MCF 10A (cell line): ENCODE measurements at regions of chr16 and their contacts with region 1.

Region 1: GRCh38 chr16:21158208-21159110 is at the start of gene LDAF1:
- DNase-seq: peak; percentile 82
- H3K4me3 Mint-ChIP-seq: peak within 1 kb of the TSS; percentile 97
- H3K27ac Mint-ChIP-seq: peak within 1 kb of the TSS; percentile 95
- H3K4me1 Mint-ChIP-seq: peaks cover 15% of the 10 kb centered on the region
- H3K27me3 Mint-ChIP-seq: no peaks in the 10 kb centered on the region
- CTCF ChIP-seq: no peak
- total RNA-seq, gene LDAF1: 30.1 and 37.8 TPM in 2 replicates

Region 2: DNA sequence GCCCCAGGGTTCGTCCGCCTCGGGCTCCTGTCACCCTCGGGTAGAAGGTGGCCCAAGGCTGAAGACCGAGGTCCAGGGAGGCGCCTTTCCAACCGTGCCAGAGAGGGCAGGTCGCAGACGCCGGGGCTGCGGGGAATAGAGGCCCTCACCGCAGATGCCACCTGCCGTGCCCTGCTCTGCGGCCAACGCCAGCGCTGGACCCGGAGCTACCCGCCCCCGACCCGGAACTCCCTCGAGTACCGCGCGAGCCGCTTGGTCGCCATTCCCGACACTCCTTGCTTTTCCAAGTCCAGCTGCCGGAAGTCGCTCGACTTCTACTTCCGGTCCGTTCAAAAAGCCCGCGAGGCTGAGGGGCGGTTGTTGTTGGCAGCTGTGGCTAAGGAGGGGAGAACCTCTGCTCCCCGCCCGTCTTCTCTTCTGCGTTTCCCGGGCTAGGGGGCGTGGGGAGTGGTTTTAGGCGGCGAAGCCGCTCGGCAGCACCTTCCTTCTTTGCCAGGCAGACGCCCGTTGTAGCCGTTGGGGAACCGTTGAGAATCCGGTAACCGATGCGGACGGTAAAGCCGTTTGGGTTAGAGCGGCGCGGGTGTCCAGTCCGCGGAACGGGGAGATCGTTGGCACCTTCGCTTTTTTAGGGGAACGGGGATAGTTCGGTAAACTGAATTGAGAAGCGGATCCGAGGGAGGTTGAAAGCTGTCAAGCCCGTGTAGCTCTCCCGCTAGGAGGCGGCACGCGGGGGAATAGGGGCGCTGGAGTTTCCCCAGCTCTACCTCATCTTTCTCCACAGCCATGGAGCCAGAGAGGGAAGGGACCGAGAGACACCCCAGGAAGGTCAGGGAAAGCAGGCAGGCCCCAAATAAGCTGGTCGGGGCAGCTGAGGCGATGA is 352.1 kb before region 1 on chr16 and contains the starts of genes ERI2 and REXO5:
- CTCF ChIA-PET with region 1: interaction called, 4 read pairs
- POLR2A ChIA-PET with region 1: interaction called, 4 read pairs
- intact Hi-C with region 1: loop called (anchors 5 kb)
- DNase-seq: peak; percentile 95
- H3K4me3 Mint-ChIP-seq: peak within 1 kb of the TSS; percentile 97
- H3K27ac Mint-ChIP-seq: peak within 1 kb of the TSS; percentile 93
- H3K4me1 Mint-ChIP-seq: peaks cover 6% of the 10 kb centered on the region
- H3K27me3 Mint-ChIP-seq: no peaks in the 10 kb centered on the region
- CTCF ChIP-seq: peak; percentile 44
- total RNA-seq, gene ERI2: 26.8 and 28.4 TPM in 2 replicates
- total RNA-seq, gene REXO5: 3.8 and 6.1 TPM in 2 replicates

Region 3: GRCh38 chr16:21021316-21021715 is 137.1 kb before region 1 on chr16:
- CTCF ChIA-PET with region 1: no interaction called
- POLR2A ChIA-PET with region 1: no interaction called
- intact Hi-C with region 1: no loop called
- DNase-seq: no peak
- H3K4me3 Mint-ChIP-seq: no peak overlapping the region
- H3K27ac Mint-ChIP-seq: no peak overlapping the region
- H3K4me1 Mint-ChIP-seq: no peaks in the 10 kb centered on the region
- H3K27me3 Mint-ChIP-seq: no peaks in the 10 kb centered on the region
- CTCF ChIP-seq: no peak

Region 4: GRCh38 chr16:21184834-21185233 is 26.4 kb after region 1 on chr16:
- CTCF ChIA-PET with region 1: interaction called, 62 read pairs
- POLR2A ChIA-PET with region 1: interaction called, 13 read pairs
- intact Hi-C with region 1: loop called (anchors 1 kb)
- DNase-seq: no peak
- H3K4me3 Mint-ChIP-seq: no peak overlapping the region
- H3K27ac Mint-ChIP-seq: no peak overlapping the region
- H3K4me1 Mint-ChIP-seq: no peaks in the 10 kb centered on the region
- H3K27me3 Mint-ChIP-seq: no peaks in the 10 kb centered on the region
- CTCF ChIP-seq: no peak

Region 5: DNA sequence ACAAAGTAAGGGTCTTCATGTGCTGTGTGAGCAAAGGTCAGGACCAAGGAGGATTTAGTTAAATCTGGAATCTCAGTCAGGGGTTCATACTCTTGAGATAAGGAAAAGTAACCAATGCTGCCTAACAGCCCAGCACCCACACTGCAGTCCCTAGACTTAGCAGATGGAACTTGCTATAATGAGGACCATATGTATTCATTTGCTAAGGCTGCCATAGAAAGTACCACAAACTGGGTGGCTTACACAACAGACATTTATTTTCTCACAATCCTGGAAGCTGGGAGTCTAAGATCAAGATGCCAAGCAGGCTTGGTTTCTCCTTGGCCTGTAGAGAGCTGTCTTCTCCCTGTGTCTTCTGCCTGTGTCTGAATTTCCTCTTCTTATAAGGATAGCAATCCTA is 32.1 kb after region 1 on chr16:
- CTCF ChIA-PET with region 1: interaction called, 62 read pairs
- POLR2A ChIA-PET with region 1: interaction called, 13 read pairs
- intact Hi-C with region 1: loop called (anchors 1 kb)
- DNase-seq: no peak
- H3K4me3 Mint-ChIP-seq: no peak overlapping the region
- H3K27ac Mint-ChIP-seq: no peak overlapping the region
- H3K4me1 Mint-ChIP-seq: no peaks in the 10 kb centered on the region
- H3K27me3 Mint-ChIP-seq: peaks cover 14% of the 10 kb centered on the region
- CTCF ChIP-seq: no peak

Region 6: DNA sequence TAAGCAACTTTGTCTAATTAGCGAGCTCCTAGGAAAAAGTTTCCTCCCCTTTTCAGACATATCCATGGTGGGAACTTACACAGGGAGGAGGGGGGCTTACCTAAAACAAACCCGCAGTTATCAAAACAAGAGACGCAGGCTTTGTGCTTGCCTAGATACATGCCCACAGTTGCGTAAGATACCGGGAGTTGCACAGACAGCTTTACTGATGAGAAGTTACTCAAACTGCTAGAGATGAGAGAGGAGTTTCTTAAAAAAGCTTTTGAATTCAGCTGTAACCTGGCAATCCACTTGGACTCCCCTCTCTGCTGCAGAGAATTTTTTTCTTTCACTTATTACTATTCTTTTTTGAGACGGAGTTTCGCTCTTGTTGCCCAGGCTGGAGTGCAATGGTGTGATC is 59.7 kb after region 1 on chr16:
- CTCF ChIA-PET with region 1: no interaction called
- POLR2A ChIA-PET with region 1: no interaction called
- intact Hi-C with region 1: no loop called
- DNase-seq: peak; percentile 21
- H3K4me3 Mint-ChIP-seq: no peak overlapping the region
- H3K27ac Mint-ChIP-seq: no peak overlapping the region
- H3K4me1 Mint-ChIP-seq: no peaks in the 10 kb centered on the region
- H3K27me3 Mint-ChIP-seq: peaks cover 9% of the 10 kb centered on the region
- CTCF ChIP-seq: no peak

Region 7: GRCh38 chr16:21277927-21278706 is 119.7 kb after region 1 on chr16 and contains the start of gene CRYM:
- CTCF ChIA-PET with region 1: interaction called, 5 read pairs
- POLR2A ChIA-PET with region 1: no interaction called
- intact Hi-C with region 1: loop called (anchors 1 kb)
- DNase-seq: no peak
- H3K4me3 Mint-ChIP-seq: peak within 1 kb of the TSS; percentile 67
- H3K27ac Mint-ChIP-seq: no peak within 1 kb of the TSS
- H3K4me1 Mint-ChIP-seq: no peaks in the 10 kb centered on the region
- H3K27me3 Mint-ChIP-seq: peaks cover 63% of the 10 kb centered on the region
- CTCF ChIP-seq: peak; percentile 85
- total RNA-seq, gene CRYM: 1.6 and 4.0 TPM in 2 replicates

Region 8: DNA sequence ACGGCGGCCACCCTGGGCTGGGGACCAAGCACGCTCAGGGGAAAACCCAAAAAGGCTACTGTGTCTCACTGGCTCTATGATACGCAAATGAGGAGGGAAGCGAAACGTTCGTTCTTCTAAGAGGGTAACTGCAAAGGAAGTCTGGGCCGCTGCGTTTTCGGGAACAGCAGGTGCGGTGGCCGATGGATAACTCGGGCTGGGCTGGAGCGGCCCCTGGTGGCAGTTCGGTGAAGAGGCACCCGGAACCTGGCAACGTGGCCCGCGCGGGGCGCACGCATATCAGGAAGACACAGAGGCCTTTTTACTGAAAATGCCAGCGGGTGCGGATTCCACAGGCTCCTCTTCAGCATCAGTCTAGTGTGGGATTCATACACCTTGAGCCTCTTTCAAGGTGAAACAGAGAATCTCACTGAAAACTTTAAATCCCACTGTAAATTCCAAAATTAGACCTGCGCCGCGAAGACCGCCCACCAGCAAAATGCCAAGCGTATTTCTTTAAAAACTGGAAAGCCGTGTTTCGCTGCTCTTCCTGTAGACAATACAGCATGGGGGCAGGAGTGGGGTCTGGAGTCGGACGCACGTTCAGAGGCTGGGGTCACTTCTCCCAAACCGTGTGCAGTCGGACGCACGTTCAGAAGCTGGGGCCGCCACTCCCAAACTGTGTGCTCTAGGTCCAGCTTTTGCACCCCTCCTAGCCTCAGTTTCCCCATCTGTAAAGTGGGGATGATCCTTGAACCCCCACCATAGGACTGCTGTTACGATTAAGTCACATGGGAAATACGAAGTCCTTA is 396.5 kb after region 1 on chr16:
- CTCF ChIA-PET with region 1: interaction called, 6 read pairs
- POLR2A ChIA-PET with region 1: no interaction called
- intact Hi-C with region 1: loop called (anchors 5 kb)
- DNase-seq: peak; percentile 84
- H3K4me3 Mint-ChIP-seq: peak overlapping the region; percentile 40
- H3K27ac Mint-ChIP-seq: no peak overlapping the region
- H3K4me1 Mint-ChIP-seq: peaks cover 8% of the 10 kb centered on the region
- H3K27me3 Mint-ChIP-seq: no peaks in the 10 kb centered on the region
- CTCF ChIP-seq: peak; percentile 100

Region 9: GRCh38 chr16:22321339-22322001 is 1163.0 kb after region 1 on chr16:
- CTCF ChIA-PET with region 1: no interaction called
- POLR2A ChIA-PET with region 1: no interaction called
- intact Hi-C with region 1: loop called (anchors 5 kb)
- DNase-seq: peak; percentile 73
- H3K4me3 Mint-ChIP-seq: no peak overlapping the region
- H3K27ac Mint-ChIP-seq: no peak overlapping the region
- H3K4me1 Mint-ChIP-seq: no peaks in the 10 kb centered on the region
- H3K27me3 Mint-ChIP-seq: no peaks in the 10 kb centered on the region
- CTCF ChIP-seq: peak; percentile 91